ENCODE measurements at regions of chr20 and their contacts with region 1.

Region 1: GRCh38 chr20:48620519-48621254 is 207.1 kb downstream of the PREX1 start:
- DNase-seq: peak; percentile 83
- H3K4me3 Mint-ChIP-seq: peak overlapping the region; percentile 52
- H3K27ac Mint-ChIP-seq: no peak overlapping the region
- H3K4me1 Mint-ChIP-seq: peaks cover 10% of the 10 kb centered on the region
- H3K27me3 Mint-ChIP-seq: peaks cover 14% of the 10 kb centered on the region

Region 2: DNA sequence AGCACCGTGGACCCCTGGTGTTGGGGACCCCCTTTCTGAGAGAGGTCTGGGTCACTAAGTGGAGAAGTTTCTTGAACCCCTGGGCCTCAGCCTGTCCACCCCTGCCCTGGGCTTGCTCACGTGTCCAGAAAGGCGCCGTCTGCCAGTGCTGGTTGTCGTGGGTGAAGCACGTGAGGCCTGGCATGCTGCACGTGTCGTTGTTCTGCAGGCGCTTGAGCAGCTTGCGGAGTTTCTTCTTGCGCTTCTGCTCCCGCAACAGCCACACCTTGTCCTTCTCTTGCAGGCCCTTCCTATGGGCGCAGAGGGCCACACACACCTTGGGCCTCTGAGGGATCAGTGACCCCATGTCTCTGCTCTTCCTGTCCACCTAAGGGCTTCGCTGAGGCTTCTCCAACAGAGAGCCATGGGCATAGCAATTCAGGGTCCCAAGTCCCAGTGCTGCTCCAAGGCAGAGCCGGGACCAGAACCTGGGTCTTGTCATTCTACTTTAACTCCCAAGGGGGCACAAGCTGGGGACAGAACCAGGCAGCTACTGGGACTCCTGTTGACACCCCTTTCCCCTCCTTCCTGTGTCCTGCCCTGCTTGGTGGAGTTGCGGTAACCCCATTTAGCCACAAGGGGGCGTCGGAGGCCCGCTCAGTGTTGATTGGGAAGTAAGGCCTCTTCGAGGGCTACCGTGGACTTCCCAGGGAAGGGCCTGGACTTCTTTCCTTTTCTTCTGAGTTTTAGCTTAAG is 957.2 kb before region 1 on chr20:
- CTCF ChIA-PET with region 1: interaction called, 29 read pairs
- DNase-seq: peak; percentile 84
- H3K4me3 Mint-ChIP-seq: no peak overlapping the region
- H3K27ac Mint-ChIP-seq: peak overlapping the region; percentile 3
- H3K4me1 Mint-ChIP-seq: peaks cover 3% of the 10 kb centered on the region
- H3K27me3 Mint-ChIP-seq: no peaks in the 10 kb centered on the region

Region 3: GRCh38 chr20:47677635-47678453 is 942.8 kb before region 1 on chr20:
- CTCF ChIA-PET with region 1: interaction called, 54 read pairs
- DNase-seq: peak; percentile 72
- H3K4me3 Mint-ChIP-seq: no peak overlapping the region
- H3K27ac Mint-ChIP-seq: no peak overlapping the region
- H3K4me1 Mint-ChIP-seq: no peaks in the 10 kb centered on the region
- H3K27me3 Mint-ChIP-seq: no peaks in the 10 kb centered on the region

Region 4: GRCh38 chr20:47691625-47692024 is 929.1 kb before region 1 on chr20:
- CTCF ChIA-PET with region 1: interaction called, 10 read pairs
- DNase-seq: no peak
- H3K4me3 Mint-ChIP-seq: no peak overlapping the region
- H3K27ac Mint-ChIP-seq: no peak overlapping the region
- H3K4me1 Mint-ChIP-seq: peaks cover 13% of the 10 kb centered on the region
- H3K27me3 Mint-ChIP-seq: peaks cover 16% of the 10 kb centered on the region

Region 5: GRCh38 chr20:47725248-47725973 is 895.3 kb before region 1 on chr20:
- CTCF ChIA-PET with region 1: interaction called, 32 read pairs
- DNase-seq: peak; percentile 93
- H3K4me3 Mint-ChIP-seq: no peak overlapping the region
- H3K27ac Mint-ChIP-seq: peak overlapping the region; percentile 100
- H3K4me1 Mint-ChIP-seq: peaks cover 69% of the 10 kb centered on the region
- H3K27me3 Mint-ChIP-seq: peaks cover 14% of the 10 kb centered on the region

Region 6: GRCh38 chr20:47785854-47786764 is 834.6 kb before region 1 on chr20:
- CTCF ChIA-PET with region 1: interaction called, 14 read pairs
- DNase-seq: peak; percentile 49
- H3K4me3 Mint-ChIP-seq: peak overlapping the region; percentile 68
- H3K27ac Mint-ChIP-seq: no peak overlapping the region
- H3K4me1 Mint-ChIP-seq: peaks cover 18% of the 10 kb centered on the region
- H3K27me3 Mint-ChIP-seq: peaks cover 83% of the 10 kb centered on the region